CD8-positive, alpha-beta T cell (primary cell): ENCODE measurements at regions of chr7 and their contacts with region 1.

Region 1: DNA sequence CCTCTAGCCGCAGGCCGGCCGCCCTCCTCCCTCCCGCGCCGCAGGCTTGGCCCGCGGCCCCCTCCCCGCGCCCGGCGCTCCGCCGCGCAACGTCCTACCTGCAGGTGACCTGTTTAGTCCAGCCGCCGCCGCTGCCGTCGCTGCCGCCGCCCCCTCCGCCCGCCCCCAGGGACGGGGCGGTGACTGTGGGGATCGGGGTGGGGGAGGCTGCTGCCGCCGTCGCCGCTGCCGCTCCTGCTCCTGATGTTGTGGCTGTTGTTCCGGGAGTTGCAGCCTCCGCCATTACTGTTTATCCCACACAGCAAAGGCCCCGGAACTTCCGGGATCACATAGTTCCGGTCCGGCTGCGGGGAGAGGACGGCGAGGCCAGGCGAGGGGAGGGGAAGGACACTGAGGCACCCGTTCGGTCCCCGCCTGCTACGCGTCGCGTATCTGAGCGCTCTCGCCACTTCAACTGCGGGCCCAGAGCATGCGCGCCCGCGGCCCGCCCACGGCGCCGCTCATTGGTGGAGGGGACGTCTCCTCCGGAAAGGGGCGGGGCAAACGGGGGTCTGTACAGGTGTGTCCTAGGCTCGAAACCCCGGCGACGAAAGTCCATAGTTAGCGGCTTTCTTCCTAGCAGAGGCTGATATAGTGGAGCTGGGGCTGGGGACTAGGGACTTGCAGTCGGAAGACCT is at the start of gene MKRN1:
- DNase-seq: peak; percentile 83 to 95 (median 93)
- ATAC-seq: peak; percentile 84
- H3K4me3 ChIP-seq: peak within 1 kb of the TSS; percentile 82 to 85
- H3K4me3 Mint-ChIP-seq: peak within 1 kb of the TSS; percentile 99
- H3K27ac ChIP-seq: peak within 1 kb of the TSS; percentile 69 to 81
- H3K27ac Mint-ChIP-seq: peak within 1 kb of the TSS; percentile 99
- H3K4me1 ChIP-seq: peaks cover 33% of the 10 kb centered on the region
- H3K4me1 Mint-ChIP-seq: peaks cover 27% of the 10 kb centered on the region
- H3K27me3 ChIP-seq: no peaks in the 10 kb centered on the region
- H3K27me3 Mint-ChIP-seq: no peaks in the 10 kb centered on the region
- CTCF ChIP-seq: no peak
- total RNA-seq, gene MKRN1: 146 to 148 TPM

Region 2: DNA sequence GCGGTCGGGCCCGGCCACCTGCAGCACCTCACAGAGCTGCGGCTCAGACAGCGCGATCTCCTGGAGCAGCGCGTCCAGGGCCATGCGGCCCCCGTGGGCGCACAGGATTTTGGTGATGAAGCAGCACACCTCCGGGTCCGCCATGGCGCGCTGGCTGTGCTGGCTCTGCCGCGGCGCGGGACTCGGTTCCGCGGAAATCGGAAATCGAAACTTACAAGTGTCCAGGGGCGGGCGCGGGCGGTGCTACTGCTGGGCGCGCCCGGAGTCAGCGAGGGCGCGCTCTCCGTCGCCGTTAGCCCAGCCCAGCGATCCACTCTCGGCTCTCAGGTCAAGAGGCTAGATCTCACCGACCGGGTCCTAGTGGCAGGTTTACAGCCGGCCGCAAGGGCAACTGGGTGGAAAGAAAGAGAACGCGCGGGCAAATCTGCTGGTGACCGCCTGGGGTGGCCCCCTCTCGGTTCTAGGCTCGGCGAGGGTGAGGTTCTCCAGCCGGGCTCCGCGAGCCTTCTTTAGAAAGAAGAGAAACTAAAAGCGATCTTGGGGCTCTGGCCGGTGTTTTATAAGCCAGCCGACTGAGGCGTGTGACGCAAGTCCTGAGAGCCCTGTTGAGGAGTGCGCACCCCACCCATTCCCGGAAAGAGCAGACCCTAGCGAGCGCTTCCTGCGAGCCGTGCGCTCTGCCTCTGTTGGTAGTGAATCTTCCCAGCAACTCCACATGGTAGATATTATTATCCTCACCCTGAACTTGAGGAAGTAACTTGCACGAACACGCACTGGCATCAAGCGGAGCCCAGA is 1369.8 kb before region 1 on chr7 and contains the start of gene ZC3HAV1:
- CTCF ChIA-PET with region 1: no interaction called
- POLR2A ChIA-PET with region 1: no interaction called
- intact Hi-C with region 1: loop called in 1 of 2 experiments (anchors 5 kb)
- DNase-seq: peak; percentile 78 to 97 (median 89)
- ATAC-seq: peak; percentile 87
- H3K4me3 ChIP-seq: peak within 1 kb of the TSS; percentile 81 to 99
- H3K4me3 Mint-ChIP-seq: peak within 1 kb of the TSS; percentile 96
- H3K27ac ChIP-seq: peak within 1 kb of the TSS; percentile 97 to 98
- H3K27ac Mint-ChIP-seq: peak within 1 kb of the TSS; percentile 99
- H3K4me1 ChIP-seq: peaks cover 18% of the 10 kb centered on the region
- H3K4me1 Mint-ChIP-seq: peaks cover 42% of the 10 kb centered on the region
- H3K27me3 ChIP-seq: no peaks in the 10 kb centered on the region
- H3K27me3 Mint-ChIP-seq: no peaks in the 10 kb centered on the region
- CTCF ChIP-seq: no peak
- total RNA-seq, gene ZC3HAV1: 194 to 198 TPM

Region 3: GRCh38 chr7:140200061-140200989 is 278.9 kb before region 1 on chr7:
- CTCF ChIA-PET with region 1: no interaction called
- POLR2A ChIA-PET with region 1: no interaction called
- intact Hi-C with region 1: no loop called
- DNase-seq: no peak
- ATAC-seq: no peak
- H3K4me3 ChIP-seq: no peak overlapping the region
- H3K4me3 Mint-ChIP-seq: no peak overlapping the region
- H3K27ac ChIP-seq: no peak overlapping the region
- H3K27ac Mint-ChIP-seq: no peak overlapping the region
- H3K4me1 ChIP-seq: no peaks in the 10 kb centered on the region
- H3K4me1 Mint-ChIP-seq: no peaks in the 10 kb centered on the region
- H3K27me3 ChIP-seq: no peaks in the 10 kb centered on the region
- H3K27me3 Mint-ChIP-seq: no peaks in the 10 kb centered on the region
- CTCF ChIP-seq: no peak

Region 4: GRCh38 chr7:140397784-140398750 is 81.1 kb before region 1 on chr7 and contains the start of gene SLC37A3:
- CTCF ChIA-PET with region 1: interaction called, 3 read pairs
- POLR2A ChIA-PET with region 1: no interaction called
- intact Hi-C with region 1: loop called (anchors 2 to 5 kb)
- DNase-seq: peak; percentile 70 to 91 (median 87)
- ATAC-seq: peak; percentile 96
- H3K4me3 ChIP-seq: peak within 1 kb of the TSS; percentile 77 to 84
- H3K4me3 Mint-ChIP-seq: peak within 1 kb of the TSS; percentile 90
- H3K27ac ChIP-seq: peak within 1 kb of the TSS; percentile 48 to 59
- H3K27ac Mint-ChIP-seq: peak within 1 kb of the TSS; percentile 81
- H3K4me1 ChIP-seq: peaks cover 14% of the 10 kb centered on the region
- H3K4me1 Mint-ChIP-seq: peaks cover 28% of the 10 kb centered on the region
- H3K27me3 ChIP-seq: no peaks in the 10 kb centered on the region
- H3K27me3 Mint-ChIP-seq: no peaks in the 10 kb centered on the region
- CTCF ChIP-seq: peak; percentile 25
- total RNA-seq, gene SLC37A3: 28.4 to 32.1 TPM

Region 5: DNA sequence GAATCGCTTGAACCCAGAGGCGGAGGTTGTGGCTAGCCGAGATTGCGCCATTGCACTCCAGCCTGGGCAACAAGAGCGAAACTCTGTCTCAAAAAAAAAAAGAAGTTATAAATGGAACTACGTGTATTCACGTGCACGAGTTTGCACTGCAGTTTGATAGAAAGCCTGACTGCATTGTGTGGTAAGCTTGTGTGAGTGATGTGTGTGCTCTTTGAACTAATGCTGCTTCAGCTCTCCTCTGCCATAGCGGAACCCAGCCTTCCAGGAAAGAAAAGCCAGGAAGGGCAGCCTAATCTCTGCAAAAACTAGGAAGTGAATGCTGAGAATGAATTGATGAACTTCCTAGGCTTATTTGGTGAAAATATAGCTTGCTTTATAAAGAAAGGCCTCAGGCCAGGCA is 15.7 kb after region 1 on chr7:
- CTCF ChIA-PET with region 1: interaction called, 172 read pairs
- POLR2A ChIA-PET with region 1: interaction called, 4 read pairs
- intact Hi-C with region 1: loop called (anchors 1 kb)
- DNase-seq: no peak
- ATAC-seq: no peak
- H3K4me3 ChIP-seq: no peak overlapping the region
- H3K4me3 Mint-ChIP-seq: no peak overlapping the region
- H3K27ac ChIP-seq: no peak overlapping the region
- H3K27ac Mint-ChIP-seq: no peak overlapping the region
- H3K4me1 ChIP-seq: no peaks in the 10 kb centered on the region
- H3K4me1 Mint-ChIP-seq: peaks cover 2% of the 10 kb centered on the region
- H3K27me3 ChIP-seq: no peaks in the 10 kb centered on the region
- H3K27me3 Mint-ChIP-seq: peaks cover 2% of the 10 kb centered on the region
- CTCF ChIP-seq: no peak

Region 6: DNA sequence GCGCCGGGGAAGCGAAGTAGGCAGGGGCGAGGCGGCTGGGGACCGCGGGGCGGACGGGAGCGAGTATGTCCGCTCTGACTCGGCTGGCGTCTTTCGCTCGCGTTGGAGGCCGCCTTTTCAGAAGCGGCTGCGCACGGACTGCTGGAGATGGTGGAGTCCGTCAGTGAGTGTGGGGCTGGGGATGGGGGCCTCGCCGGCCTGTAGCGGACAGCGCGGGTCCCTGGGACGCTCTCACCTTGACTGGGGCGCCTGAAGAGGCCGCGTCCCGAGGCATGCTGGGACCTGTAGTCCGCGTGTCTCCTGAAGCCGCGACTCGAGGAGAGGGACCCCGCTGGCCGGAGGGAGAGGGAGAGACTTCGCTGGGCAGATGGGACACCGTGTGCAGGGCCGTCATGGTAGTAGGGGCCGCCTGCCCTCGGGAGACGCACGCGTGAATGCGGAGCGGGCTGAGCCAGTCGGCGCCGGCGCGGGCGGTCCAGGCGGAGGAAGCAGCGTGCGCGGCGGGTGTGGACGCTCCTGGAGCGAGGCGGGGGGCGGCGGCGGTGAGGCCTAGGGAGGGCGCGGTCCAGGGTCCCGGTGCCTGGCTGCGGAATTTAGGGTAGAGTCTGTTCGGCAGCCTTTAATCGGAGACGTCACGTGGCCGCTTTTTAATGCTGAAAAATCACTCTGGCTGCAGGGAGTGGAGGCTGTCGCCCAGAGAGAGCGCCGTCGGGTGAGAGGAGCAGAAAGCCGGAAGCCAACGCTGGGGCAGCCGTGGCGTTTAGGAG is 217.7 kb after region 1 on chr7 and contains the start of gene NDUFB2:
- CTCF ChIA-PET with region 1: no interaction called
- POLR2A ChIA-PET with region 1: no interaction called
- intact Hi-C with region 1: loop called (anchors 2 kb)
- DNase-seq: peak in 8 of 9 experiments; percentile 30 to 85 (median 64)
- ATAC-seq: peak; percentile 87
- H3K4me3 ChIP-seq: peak within 1 kb of the TSS; percentile 96 to 100
- H3K4me3 Mint-ChIP-seq: peak within 1 kb of the TSS; percentile 97
- H3K27ac ChIP-seq: peak within 1 kb of the TSS; percentile 96
- H3K27ac Mint-ChIP-seq: peak within 1 kb of the TSS; percentile 99
- H3K4me1 ChIP-seq: peaks cover 19% of the 10 kb centered on the region
- H3K4me1 Mint-ChIP-seq: peaks cover 45% of the 10 kb centered on the region
- H3K27me3 ChIP-seq: no peaks in the 10 kb centered on the region
- H3K27me3 Mint-ChIP-seq: no peaks in the 10 kb centered on the region
- CTCF ChIP-seq: no peak
- total RNA-seq, gene NDUFB2: 83.9 to 84.5 TPM

Region 7: DNA sequence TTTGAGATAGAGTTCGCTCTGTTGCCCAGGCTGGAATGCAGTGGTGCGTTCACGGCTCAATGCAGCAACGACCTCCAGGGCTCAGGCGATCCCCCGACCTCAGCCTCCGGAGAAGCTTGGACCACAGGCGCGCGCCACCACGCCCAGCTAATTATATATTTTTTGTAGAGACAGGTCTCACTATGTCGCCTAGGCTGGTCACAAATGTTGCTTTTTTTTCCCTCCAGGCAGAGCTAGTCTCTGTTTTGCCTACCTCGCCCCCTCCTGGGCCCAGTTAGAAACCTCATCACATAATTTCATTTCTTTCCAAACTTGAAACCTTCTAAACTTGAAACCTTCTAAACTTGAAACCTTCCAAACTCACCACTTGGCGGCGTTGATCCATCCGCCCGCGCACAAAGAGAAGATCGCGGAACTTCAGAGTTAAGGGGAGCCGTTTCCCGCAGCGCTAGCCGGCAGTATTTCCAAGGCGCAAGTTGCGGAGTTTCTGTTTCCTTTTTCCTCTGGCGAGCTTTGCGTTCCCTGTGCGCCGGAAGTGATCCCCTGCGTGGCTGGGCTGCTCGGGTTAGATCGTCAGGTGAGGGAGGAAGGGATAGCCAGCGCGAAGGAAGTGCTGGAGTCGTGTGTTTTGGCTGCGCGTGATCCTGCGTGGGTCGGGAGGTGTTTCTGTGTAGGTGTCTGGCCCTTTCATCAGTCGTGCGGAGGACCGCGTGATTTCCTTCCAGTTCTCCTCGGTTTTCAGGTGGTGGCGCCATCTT is 1258.8 kb after region 1 on chr7 and contains the start of gene SSBP1:
- CTCF ChIA-PET with region 1: no interaction called
- POLR2A ChIA-PET with region 1: no interaction called
- intact Hi-C with region 1: loop called in 1 of 2 experiments (anchors 5 kb)
- DNase-seq: peak; percentile 84 to 98 (median 90)
- ATAC-seq: peak; percentile 84
- H3K4me3 ChIP-seq: peak within 1 kb of the TSS; percentile 63 to 83
- H3K4me3 Mint-ChIP-seq: peak within 1 kb of the TSS; percentile 99
- H3K27ac ChIP-seq: peak within 1 kb of the TSS; percentile 77 to 81
- H3K27ac Mint-ChIP-seq: peak within 1 kb of the TSS; percentile 99
- H3K4me1 ChIP-seq: peaks cover 30% of the 10 kb centered on the region
- H3K4me1 Mint-ChIP-seq: peaks cover 45% of the 10 kb centered on the region
- H3K27me3 ChIP-seq: no peaks in the 10 kb centered on the region
- H3K27me3 Mint-ChIP-seq: no peaks in the 10 kb centered on the region
- CTCF ChIP-seq: peak; percentile 85
- total RNA-seq, gene SSBP1: 107 TPM